Tibial artery (tissue), 4 donors: ENCODE measurements at regions of chr1 and their contacts with region 1.

Region 1: GRCh38 chr1:42816585-42817434 is at the starts of genes ERMAP and SVBP:
- DNase-seq: peak; percentile 88 to 95
- H3K4me3 ChIP-seq: peak within 1 kb of the TSS; percentile 62 to 66
- H3K27ac ChIP-seq: peak within 1 kb of the TSS; percentile 87 to 91
- H3K4me1 ChIP-seq: peaks cover 0 to 20% (median 13%) of the 10 kb centered on the region in 4 donors
- H3K27me3 ChIP-seq: no peaks in the 10 kb centered on the region
- CTCF ChIP-seq: no peak

Region 2: DNA sequence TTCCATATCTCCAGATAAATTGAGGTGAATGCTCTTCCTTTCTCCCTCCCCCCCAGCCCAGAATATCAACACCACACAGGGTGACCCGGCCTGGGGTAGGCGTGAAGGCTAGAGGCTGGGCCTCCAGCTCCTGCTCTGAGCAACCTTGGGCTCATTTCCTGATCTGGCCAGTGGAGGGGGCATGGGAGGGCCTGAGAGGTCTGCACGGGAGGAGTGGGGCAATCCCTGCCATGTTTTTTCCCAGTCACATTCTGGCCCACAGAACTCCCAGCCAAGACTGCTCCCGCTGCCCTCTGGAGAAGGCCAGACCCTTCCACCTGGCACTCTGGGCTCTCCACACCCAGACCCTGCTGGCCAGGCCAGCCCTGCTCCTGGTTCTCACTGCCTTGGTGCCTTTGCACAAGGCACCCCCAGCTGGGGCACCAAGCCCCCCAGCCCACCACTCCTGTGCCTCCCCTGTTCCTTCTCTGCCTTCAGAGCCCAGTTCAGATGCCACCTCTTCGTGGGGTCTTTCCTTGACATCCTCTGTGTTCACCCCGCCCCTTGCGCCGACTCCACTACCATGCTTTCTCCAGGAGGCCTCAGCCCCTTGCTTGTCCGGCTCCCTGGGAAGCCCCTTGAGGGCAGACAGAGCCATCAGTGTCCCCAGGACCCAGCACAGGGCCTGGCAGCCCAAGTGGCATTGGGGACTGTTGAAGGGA is 80.5 kb before region 1 on chr1:
- intact Hi-C with region 1: no loop called
- DNase-seq: no peak
- H3K4me3 ChIP-seq: no peak overlapping the region
- H3K27ac ChIP-seq: no peak overlapping the region
- H3K4me1 ChIP-seq: no peaks in the 10 kb centered on the region
- H3K27me3 ChIP-seq: no peaks in the 10 kb centered on the region
- CTCF ChIP-seq: no peak

Region 3: DNA sequence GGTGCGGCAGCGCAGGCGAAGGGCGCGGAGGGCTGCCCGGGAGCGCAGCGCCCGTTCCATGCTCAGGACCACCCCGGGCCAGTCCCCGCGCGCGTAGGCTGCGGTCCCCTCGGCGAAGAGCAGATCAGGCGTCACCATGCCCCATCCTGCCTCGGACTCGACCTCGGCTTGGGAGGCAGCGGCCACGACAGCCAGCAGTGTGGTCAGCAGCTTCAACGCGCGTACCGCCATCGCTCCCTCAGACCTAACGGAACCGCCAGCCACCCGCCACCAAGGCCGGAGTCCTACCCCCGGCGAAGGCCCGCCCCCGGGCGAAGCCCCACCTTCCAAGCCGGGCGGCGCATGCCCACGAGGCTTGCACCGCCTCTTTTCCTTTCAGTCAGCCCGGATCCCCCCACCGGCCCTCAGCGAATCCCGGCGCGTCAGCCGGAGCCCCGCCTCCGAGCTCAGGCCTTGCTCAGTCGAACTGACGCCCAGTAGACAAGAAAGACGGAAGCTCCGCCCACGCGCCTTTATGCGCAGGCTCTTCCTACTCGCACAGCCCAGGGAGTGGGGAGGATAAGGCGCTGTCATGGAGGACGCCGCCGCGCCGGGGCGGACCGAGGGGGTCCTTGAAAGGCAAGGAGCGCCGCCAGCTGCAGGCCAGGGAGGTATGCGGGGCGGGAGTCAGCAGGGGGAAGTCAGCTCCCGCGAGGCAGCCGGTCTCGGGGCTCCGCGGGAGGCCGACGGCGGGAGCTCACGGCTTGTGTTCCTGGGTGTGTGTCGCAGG is 49.9 kb before region 1 on chr1 and contains the starts of genes C1orf50 and P3H1:
- intact Hi-C with region 1: loop called (anchors 5 kb)
- DNase-seq: peak; percentile 100
- H3K4me3 ChIP-seq: peak within 1 kb of the TSS; percentile 86 to 98
- H3K27ac ChIP-seq: peak within 1 kb of the TSS; percentile 89 to 94
- H3K4me1 ChIP-seq: peaks cover 0 to 48% (median 18%) of the 10 kb centered on the region in 4 donors
- H3K27me3 ChIP-seq: no peaks in the 10 kb centered on the region
- CTCF ChIP-seq: no peak